ENCODE measurements at regions of chr10 and their contacts with region 1.

Region 1: GRCh38 chr10:93916257-93917063 is 22.7 kb downstream of the SLC35G1 start:
- DNase-seq: no peak
- H3K4me3 ChIP-seq: no peak overlapping the region
- H3K27ac ChIP-seq: no peak overlapping the region
- H3K4me1 ChIP-seq: no peaks in the 10 kb centered on the region
- H3K27me3 ChIP-seq: no peaks in the 10 kb centered on the region
- CTCF ChIP-seq: peak; percentile 49 to 57

Region 2: GRCh38 chr10:93406364-93407145 is 509.9 kb before region 1 on chr10:
- intact Hi-C with region 1: no loop called
- DNase-seq: no peak
- H3K4me3 ChIP-seq: no peak overlapping the region
- H3K27ac ChIP-seq: peak overlapping the region; percentile 35 to 53
- H3K4me1 ChIP-seq: peaks cover 0 to 21% (median 0%) of the 10 kb centered on the region in 4 donors
- H3K27me3 ChIP-seq: no peaks in the 10 kb centered on the region
- CTCF ChIP-seq: no peak

Region 3: GRCh38 chr10:94066411-94066810 is 150.0 kb after region 1 on chr10:
- intact Hi-C with region 1: loop called (anchors 10 kb)
- DNase-seq: no peak
- H3K4me3 ChIP-seq: no peak overlapping the region
- H3K27ac ChIP-seq: no peak overlapping the region
- H3K4me1 ChIP-seq: no peaks in the 10 kb centered on the region
- H3K27me3 ChIP-seq: no peaks in the 10 kb centered on the region
- CTCF ChIP-seq: no peak

Region 4: DNA sequence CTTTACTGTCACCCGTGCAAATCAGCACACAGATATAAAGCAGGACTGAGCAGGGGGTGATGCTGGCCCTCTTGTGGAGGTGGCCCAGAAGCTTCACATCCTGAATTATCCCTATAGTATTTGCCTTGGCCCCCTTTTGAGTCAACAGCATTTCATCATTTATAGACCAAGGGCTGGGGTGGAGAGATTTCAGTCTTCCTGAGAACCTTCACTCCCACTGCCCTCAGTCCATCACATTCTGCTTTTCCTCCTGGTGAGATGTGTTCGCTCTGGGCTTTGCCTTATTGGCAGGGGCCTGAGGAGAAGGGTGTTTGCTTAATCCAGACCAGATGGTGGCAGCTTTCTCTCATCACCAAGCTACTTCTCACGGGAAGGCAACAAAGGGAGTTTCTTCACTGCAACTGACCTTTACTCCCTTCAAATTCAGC is 398.6 kb after region 1 on chr10:
- intact Hi-C with region 1: loop called (anchors 5 kb)
- DNase-seq: no peak
- H3K4me3 ChIP-seq: no peak overlapping the region
- H3K27ac ChIP-seq: peak overlapping the region; percentile 15 to 62
- H3K4me1 ChIP-seq: peaks cover 0 to 34% (median 6%) of the 10 kb centered on the region in 4 donors
- H3K27me3 ChIP-seq: no peaks in the 10 kb centered on the region
- CTCF ChIP-seq: no peak

Region 5: DNA sequence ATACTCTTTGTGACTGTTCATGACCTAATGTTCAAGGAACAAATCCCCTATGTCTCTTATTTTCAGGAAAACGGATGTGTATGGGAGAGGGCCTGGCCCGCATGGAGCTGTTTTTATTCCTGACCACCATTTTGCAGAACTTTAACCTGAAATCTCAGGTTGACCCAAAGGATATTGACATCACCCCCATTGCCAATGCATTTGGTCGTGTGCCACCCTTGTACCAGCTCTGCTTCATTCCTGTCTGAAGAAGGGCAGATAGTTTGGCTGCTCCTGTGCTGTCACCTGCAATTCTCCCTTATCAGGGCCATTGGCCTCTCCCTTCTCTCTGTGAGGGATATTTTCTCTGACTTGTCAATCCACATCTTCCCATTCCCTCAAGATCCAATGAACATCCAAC is 818.7 kb after region 1 on chr10:
- intact Hi-C with region 1: no loop called
- DNase-seq: no peak
- H3K4me3 ChIP-seq: no peak overlapping the region
- H3K27ac ChIP-seq: no peak overlapping the region
- H3K4me1 ChIP-seq: no peaks in the 10 kb centered on the region
- H3K27me3 ChIP-seq: no peaks in the 10 kb centered on the region
- CTCF ChIP-seq: no peak

Region 6: GRCh38 chr10:94757916-94758315 is 841.5 kb after region 1 on chr10:
- intact Hi-C with region 1: no loop called
- DNase-seq: no peak
- H3K4me3 ChIP-seq: no peak overlapping the region
- H3K27ac ChIP-seq: no peak overlapping the region
- H3K4me1 ChIP-seq: no peaks in the 10 kb centered on the region
- H3K27me3 ChIP-seq: no peaks in the 10 kb centered on the region
- CTCF ChIP-seq: no peak

Measured in tibial artery (tissue), 4 donors.